ENCODE measurements at regions of chr11 and their contacts with region 1.

Region 1: GRCh38 chr11:68257475-68258362 is 14.1 kb downstream of the C11orf24 start:
- DNase-seq: peak; percentile 94 to 100 (median 98)
- ATAC-seq: peak; percentile 94 to 98 (median 96)
- H3K4me3 ChIP-seq: no peak overlapping the region
- H3K27ac ChIP-seq: no peak overlapping the region
- H3K4me1 ChIP-seq: no peaks in the 10 kb centered on the region
- H3K27me3 ChIP-seq: no peaks in the 10 kb centered on the region
- CTCF ChIP-seq: peak; percentile 69 to 83 (median 80)

Region 2: DNA sequence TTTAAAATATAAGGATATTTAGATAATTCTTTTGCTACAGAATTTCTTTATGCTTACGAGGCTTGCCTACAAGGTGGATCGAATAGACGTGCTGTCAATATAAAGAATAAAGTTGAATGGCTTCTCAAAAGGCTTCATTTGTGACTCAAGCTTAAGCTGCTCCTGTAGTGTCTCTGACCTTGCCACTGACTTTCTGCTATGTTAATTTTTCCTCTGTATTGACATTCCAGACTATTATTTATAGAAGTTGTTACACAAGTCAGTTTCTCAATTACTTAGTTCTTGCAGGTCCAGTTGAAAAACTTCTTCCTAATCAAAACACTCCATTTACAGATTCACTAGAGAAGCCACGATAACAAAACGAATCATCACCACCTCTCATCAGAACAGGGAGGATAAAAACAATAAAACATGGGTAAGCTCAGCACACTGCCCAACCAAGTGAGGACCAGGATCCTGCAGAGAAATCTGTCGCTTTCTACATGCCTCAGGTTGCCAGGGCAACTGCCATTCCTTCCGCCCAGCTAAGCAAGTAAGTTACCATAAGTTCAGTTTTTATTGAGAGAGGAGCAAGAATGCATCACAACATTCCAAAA is 97.5 kb before region 1 on chr11:
- intact Hi-C with region 1: no loop called
- DNase-seq: no peak
- ATAC-seq: no peak
- H3K4me3 ChIP-seq: no peak overlapping the region
- H3K27ac ChIP-seq: no peak overlapping the region
- H3K4me1 ChIP-seq: no peaks in the 10 kb centered on the region
- H3K27me3 ChIP-seq: no peaks in the 10 kb centered on the region
- CTCF ChIP-seq: no peak

Region 3: GRCh38 chr11:68297812-68298658 is 40.3 kb after region 1 on chr11:
- intact Hi-C with region 1: loop called in 2 of 3 experiments (anchors 5 kb)
- DNase-seq: peak; percentile 74 to 94 (median 86)
- ATAC-seq: peak; percentile 94 to 98 (median 95)
- H3K4me3 ChIP-seq: peak overlapping the region in 2 of 4 donors; percentile 20 to 30
- H3K27ac ChIP-seq: peak overlapping the region; percentile 67 to 87 (median 74)
- H3K4me1 ChIP-seq: peaks cover 9 to 12% (median 11%) of the 10 kb centered on the region in 3 donors
- H3K27me3 ChIP-seq: no peaks in the 10 kb centered on the region
- CTCF ChIP-seq: peak; percentile 95 to 99 (median 98)

Region 4: DNA sequence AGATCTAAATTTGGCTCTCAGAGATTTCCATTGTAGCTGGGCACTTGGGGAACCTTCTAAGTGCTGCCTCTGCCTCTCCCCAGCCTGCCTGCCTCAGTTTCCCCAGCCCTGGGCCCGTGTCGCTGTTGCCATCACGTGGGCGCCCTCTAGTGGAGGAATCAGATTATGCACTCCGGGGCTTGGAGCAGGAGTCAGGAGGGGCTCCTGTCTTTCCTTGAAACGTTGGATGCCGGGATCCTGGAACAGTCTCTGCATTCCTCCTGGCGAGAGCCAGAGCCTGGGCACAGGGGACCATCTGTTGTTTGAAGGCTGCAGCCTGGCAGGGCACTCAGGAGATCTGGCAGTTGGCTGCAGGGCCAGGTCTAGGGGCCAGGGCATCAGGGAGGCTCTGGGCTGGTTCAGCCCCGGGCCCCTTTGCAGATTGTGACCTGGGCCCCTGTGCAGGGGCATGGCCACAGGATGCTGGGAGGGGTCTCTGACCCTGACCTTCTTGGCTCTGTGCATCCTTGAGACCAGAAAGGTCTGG is 126.3 kb after region 1 on chr11:
- intact Hi-C with region 1: loop called in 2 of 3 experiments (anchors 5 to 10 kb)
- DNase-seq: peak in 5 of 6 donors; percentile 42 to 85 (median 69)
- ATAC-seq: peak in 3 of 4 donors; percentile 33 to 55 (median 52)
- H3K4me3 ChIP-seq: no peak overlapping the region
- H3K27ac ChIP-seq: no peak overlapping the region
- H3K4me1 ChIP-seq: peaks cover 0 to 15% (median 4%) of the 10 kb centered on the region in 3 donors
- H3K27me3 ChIP-seq: no peaks in the 10 kb centered on the region
- CTCF ChIP-seq: peak; percentile 76 to 92 (median 86)

Region 5: GRCh38 chr11:68447015-68447801 is 189.5 kb after region 1 on chr11:
- intact Hi-C with region 1: loop called in 1 of 3 experiments (anchors 5 kb)
- DNase-seq: peak; percentile 57 to 90 (median 76)
- ATAC-seq: peak; percentile 86 to 96 (median 92)
- H3K4me3 ChIP-seq: no peak overlapping the region
- H3K27ac ChIP-seq: no peak overlapping the region
- H3K4me1 ChIP-seq: no peaks in the 10 kb centered on the region
- H3K27me3 ChIP-seq: no peaks in the 10 kb centered on the region
- CTCF ChIP-seq: peak; percentile 92 to 94 (median 94)